Caco-2 (cell line): ENCODE measurements at regions of chr10 and their contacts with region 1.

Region 1: DNA sequence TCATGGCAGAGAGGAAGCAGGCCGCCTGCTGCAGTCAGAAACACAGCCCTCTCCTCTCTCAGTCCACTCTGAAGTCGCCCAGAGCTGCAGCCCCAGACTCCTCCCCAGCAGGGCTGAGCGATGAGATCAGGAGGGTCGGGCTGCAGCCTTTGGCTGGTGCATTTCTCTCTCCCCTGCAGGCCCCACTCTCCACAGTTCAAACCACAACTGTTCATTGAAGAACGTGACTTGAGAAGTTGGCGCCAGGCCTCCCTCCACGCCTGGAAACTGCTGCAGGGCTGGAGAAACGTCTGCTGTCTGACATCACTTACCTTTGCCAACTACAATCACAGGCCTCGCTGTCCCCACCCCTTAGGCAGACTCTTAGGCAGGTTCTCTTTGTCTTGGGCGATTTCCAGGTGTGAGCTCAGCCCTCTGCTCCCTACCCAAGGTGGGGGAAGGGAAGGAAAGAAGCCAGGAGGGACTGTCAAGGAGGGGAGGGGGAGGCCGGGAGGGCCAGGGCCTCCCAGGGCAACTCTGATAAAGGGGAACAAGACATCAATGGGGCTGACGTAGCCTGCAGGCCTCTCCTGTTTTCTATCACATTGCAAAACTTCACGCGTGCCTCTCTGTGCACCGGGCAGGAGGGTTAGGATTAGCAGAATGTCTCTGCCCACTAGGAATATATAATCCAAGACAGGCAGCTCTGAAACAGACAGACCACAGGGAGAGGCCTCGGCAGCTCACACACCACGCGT is 32.8 kb downstream of the CALML5 start:
- DNase-seq: peak in 1 of 2 experiments; percentile 45
- H3K4me3 ChIP-seq: no peak overlapping the region
- H3K4me3 Mint-ChIP-seq: no peak overlapping the region
- H3K27ac Mint-ChIP-seq: peak overlapping the region; percentile 40
- H3K4me1 ChIP-seq: peaks cover 39% of the 10 kb centered on the region
- H3K4me1 Mint-ChIP-seq: peaks cover 21% of the 10 kb centered on the region
- H3K27me3 ChIP-seq: no peaks in the 10 kb centered on the region
- H3K27me3 Mint-ChIP-seq: no peaks in the 10 kb centered on the region
- CTCF ChIP-seq: no peak

Region 2: DNA sequence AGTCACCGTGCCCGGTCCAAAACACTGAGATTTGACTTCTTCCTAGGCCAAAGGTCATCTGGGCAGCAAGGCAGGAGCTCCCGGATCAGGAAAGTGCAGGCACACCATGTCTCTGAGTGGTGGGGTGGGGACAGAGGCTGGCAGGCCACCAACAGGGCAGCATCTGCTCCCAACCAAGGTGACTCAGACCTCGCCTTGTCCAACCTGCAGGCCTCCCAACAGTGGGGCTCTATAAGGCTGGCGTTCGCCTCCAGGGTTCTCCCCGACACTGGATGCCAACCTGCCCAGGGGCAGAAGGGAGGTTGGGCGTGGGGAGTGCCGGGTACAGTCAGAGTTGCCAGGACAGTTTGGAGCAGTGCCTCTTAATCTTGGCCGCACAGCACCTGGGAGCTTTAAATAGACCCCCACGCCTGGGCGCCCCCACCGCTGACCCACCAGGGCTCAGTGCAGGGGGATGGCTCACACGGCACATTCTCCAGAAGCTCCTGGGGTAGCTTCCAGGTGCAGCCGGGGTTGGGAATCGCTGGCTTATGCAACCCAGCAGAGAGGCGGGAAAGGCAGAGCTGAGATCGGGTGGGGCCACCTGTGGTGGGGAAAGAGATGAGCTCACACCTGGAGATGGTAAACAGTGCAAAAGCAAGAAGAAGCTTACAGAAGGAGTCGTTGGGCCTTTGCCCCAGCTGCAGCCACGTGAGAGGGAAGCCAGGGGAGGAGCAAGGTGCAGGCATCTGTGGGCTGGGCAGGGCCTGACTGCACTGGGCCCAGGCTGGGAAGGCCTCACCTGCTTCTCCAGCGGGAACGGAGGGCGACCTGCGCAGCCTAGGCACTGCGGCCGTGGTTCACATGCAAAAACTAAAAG is 22.0 kb after region 1 on chr10:
- CTCF ChIA-PET with region 1: interaction called, 5 read pairs
- POLR2A ChIA-PET with region 1: interaction called, 3 read pairs
- intact Hi-C with region 1: loop called (anchors 2 kb)
- DNase-seq: peak; percentile 89 to 94
- H3K4me3 ChIP-seq: no peak overlapping the region
- H3K4me3 Mint-ChIP-seq: no peak overlapping the region
- H3K27ac Mint-ChIP-seq: peak overlapping the region; percentile 84
- H3K4me1 ChIP-seq: peaks cover 33% of the 10 kb centered on the region
- H3K4me1 Mint-ChIP-seq: peaks cover 11% of the 10 kb centered on the region
- H3K27me3 ChIP-seq: no peaks in the 10 kb centered on the region
- H3K27me3 Mint-ChIP-seq: no peaks in the 10 kb centered on the region
- CTCF ChIP-seq: no peak

Region 3: GRCh38 chr10:5595591-5596590 is 129.3 kb after region 1 on chr10:
- CTCF ChIA-PET with region 1: no interaction called
- POLR2A ChIA-PET with region 1: no interaction called
- intact Hi-C with region 1: no loop called
- DNase-seq: no peak
- H3K4me3 ChIP-seq: no peak overlapping the region
- H3K4me3 Mint-ChIP-seq: no peak overlapping the region
- H3K27ac Mint-ChIP-seq: no peak overlapping the region
- H3K4me1 ChIP-seq: peaks cover 20% of the 10 kb centered on the region
- H3K4me1 Mint-ChIP-seq: peaks cover 21% of the 10 kb centered on the region
- H3K27me3 ChIP-seq: no peaks in the 10 kb centered on the region
- H3K27me3 Mint-ChIP-seq: no peaks in the 10 kb centered on the region
- CTCF ChIP-seq: no peak